Right ventricle myocardium superior (tissue), 1 donor: ENCODE measurements at regions of chr7 and their contacts with region 1.

Region 1: GRCh38 chr7:22110227-22110839 is 164.6 kb upstream of the CDCA7L start:
- DNase-seq: no peak
- ATAC-seq: peak; percentile 89

Region 2: DNA sequence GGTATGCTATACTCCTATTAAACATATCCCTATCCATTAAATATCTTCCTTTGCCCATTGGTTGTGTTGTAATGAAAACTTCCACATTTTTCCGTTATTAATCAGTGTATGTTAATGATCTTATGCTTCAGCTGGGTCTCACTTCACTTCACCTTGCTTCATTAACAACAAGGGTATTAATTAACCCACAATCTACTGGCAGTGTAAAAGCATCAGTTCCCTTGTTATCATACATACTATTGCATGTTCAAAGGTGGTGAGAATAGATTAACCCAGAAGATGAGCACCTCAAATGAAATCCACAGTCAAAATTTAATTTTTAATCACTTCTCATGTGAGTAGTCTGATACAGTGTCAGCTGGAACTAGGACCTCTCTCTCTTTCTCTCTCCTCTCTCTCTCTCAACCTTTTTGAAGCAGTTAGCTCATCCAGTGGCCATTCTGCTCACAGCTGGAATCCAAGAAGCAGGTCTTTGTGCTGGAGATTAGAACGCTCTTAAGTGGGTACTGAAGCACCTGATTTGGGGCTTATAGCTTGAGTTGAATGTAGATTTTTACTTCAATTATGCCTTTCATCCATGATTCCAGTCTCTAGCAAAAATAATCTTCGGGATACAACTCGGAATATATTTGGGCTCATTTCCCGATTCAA is 74.3 kb after region 1 on chr7:
- intact Hi-C with region 1: no loop called
- DNase-seq: no peak
- ATAC-seq: no peak

Region 3: DNA sequence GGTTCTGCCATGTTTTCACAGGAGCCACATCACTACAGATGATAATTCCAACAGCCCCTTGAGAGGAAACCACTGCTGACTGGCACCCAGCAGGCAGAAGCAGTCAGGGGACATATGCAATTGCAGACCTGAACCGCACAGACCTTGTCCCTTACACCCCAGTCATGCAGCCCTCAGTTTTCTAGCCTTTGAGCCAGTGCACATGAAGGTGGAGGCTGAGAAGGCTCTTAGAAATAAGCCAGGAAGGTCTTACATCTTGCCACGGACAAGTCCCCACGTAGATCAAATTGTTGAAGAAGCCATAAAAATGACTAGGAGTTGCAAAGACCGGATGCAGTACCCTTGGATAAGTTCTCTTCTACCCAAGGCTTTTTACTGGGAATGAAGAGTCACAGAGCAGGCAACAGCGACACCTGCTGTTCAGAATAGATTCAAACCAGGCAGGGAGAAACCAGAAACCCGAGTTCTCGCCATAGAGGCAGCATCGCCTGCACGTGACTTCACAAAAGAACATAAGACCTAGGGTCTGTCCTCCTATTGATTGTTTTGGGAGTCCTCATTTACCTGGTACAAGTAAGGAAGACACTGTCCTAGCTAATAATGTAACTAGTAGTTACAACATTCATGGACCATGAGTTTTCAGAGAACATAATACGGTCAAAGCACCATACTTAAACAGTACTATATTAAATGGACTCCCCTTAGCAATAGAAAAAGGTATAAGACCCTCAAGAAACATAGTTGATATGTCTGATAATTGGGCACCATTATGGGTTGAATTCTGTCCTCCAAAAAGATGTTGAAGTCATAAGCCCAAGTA is 378.5 kb after region 1 on chr7:
- intact Hi-C with region 1: loop called (anchors 2 kb)
- DNase-seq: peak; percentile 48
- ATAC-seq: peak; percentile 90